Activated CD4-positive, alpha-beta T cell treated with anti-CD3 and anti-CD28 coated beads, Interleukin-2, amount 10 ng/mL, durations not matched to agents 24 days and 14 days (primary cell): ENCODE measurements at regions of chr1 and their contacts with region 1.

Region 1: DNA sequence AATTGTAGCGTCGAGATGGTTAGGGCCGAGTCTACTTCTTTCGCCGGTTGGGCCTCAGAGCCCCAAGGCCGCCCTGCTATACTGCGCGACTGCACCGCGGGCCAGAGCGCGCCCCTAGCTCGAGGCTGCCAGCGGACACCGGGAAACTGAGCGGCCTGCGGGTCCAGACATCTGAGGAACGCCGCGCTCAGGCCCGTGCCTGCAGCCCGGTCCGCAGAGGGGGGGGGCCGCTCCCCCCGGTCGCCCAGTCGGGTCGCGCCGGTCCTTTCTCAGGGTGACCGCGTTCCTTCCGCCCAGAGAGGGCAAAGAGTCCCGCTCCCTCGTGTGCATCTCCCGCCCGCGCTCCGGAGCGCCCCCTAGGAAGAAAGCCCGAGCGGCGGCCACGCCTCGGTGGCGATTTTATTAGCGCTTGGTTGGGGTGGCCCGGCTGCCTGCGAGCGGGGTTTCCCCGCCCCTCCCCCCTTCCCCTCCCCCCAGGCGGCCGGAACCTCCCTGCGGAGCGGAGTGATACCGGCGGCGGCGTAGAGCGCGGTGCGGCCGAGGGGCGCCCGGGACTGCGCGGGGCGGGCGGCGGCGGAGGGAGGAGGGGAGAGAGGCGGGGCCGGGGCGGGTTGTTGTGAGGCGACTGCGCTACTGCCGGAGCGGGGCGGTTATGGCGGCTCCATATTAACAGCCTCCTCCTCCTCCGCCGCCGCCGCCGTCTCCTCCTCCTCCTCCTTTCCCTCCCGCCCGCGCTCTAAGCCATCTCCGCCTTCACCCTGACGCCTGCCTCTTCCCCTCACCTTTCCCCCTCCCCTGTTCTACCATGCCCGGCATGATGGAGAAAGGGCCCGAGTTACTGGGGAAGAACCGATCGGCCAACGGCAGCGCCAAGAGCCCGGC is at the start of gene RCOR3:
- DNase-seq: peak; percentile 96
- H3K4me3 Mint-ChIP-seq: peak within 1 kb of the TSS; percentile 96
- H3K27ac Mint-ChIP-seq: peak within 1 kb of the TSS; percentile 97
- H3K4me1 Mint-ChIP-seq: peaks cover 13% of the 10 kb centered on the region
- H3K27me3 Mint-ChIP-seq: no peaks in the 10 kb centered on the region
- total RNA-seq, gene RCOR3: 38.0 and 39.8 TPM in 2 replicates

Region 2: GRCh38 chr1:211133836-211134669 is 124.9 kb before region 1 on chr1 and contains the start of gene KCNH1:
- intact Hi-C with region 1: loop called (anchors 5 kb)
- DNase-seq: peak; percentile 91
- H3K4me3 Mint-ChIP-seq: peak within 1 kb of the TSS; percentile 71
- H3K27ac Mint-ChIP-seq: no peak within 1 kb of the TSS
- H3K4me1 Mint-ChIP-seq: peaks cover 2% of the 10 kb centered on the region
- H3K27me3 Mint-ChIP-seq: peaks cover 75% of the 10 kb centered on the region
- total RNA-seq, gene KCNH1: not detected in 2 replicates

Region 3: GRCh38 chr1:211281320-211282022 is 22.5 kb after region 1 on chr1:
- intact Hi-C with region 1: loop called (anchors 1 kb)
- DNase-seq: no peak
- H3K4me3 Mint-ChIP-seq: no peak overlapping the region
- H3K27ac Mint-ChIP-seq: no peak overlapping the region
- H3K4me1 Mint-ChIP-seq: peaks cover 4% of the 10 kb centered on the region
- H3K27me3 Mint-ChIP-seq: no peaks in the 10 kb centered on the region

Region 4: DNA sequence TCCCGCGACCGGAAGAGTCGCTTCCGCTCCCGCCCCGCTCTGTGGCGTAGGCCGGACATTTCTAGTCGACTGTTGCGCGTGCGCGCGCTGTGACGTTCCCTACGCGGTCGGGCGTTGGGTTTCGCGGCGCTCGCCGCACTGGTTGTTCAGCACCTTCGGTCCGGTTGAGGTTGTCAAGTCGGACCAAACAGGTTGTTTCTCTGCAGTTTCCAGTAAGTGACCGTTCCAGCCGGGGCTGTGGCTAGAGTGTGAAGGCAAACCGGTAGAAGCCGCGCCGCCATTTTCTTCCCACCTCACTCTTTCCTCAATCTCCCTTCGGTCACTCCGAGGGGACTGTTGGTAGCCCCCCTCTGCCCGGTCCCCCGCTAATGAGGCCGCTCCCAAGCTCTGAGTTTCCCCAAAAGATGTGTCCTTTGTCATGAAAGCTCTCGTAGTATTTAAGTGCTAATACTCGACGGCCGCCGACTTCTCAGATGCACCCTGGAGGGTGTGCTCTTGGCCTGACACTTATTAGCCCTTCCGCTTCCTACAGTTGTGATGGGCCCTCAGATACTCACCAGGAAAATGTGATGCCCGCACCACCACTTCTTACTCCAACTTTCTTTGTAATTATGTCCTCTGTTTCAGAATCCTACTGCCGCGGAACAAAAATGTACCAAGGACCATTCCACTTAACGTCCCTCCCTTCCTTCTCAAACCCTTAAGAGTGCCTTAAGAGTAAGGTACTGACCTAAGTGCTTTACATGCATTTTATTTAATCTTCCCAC is 123.9 kb after region 1 on chr1:
- intact Hi-C with region 1: loop called (anchors 1 kb)
- DNase-seq: peak; percentile 95
- H3K4me3 Mint-ChIP-seq: peak overlapping the region; percentile 80
- H3K27ac Mint-ChIP-seq: peak overlapping the region; percentile 93
- H3K4me1 Mint-ChIP-seq: peaks cover 43% of the 10 kb centered on the region
- H3K27me3 Mint-ChIP-seq: peaks cover 6% of the 10 kb centered on the region

Region 5: GRCh38 chr1:211654838-211655787 is 396.1 kb after region 1 on chr1:
- intact Hi-C with region 1: loop called (anchors 10 kb)
- DNase-seq: peak; percentile 94
- H3K4me3 Mint-ChIP-seq: no peak overlapping the region
- H3K27ac Mint-ChIP-seq: no peak overlapping the region
- H3K4me1 Mint-ChIP-seq: peaks cover 6% of the 10 kb centered on the region
- H3K27me3 Mint-ChIP-seq: peaks cover 10% of the 10 kb centered on the region

Region 6: DNA sequence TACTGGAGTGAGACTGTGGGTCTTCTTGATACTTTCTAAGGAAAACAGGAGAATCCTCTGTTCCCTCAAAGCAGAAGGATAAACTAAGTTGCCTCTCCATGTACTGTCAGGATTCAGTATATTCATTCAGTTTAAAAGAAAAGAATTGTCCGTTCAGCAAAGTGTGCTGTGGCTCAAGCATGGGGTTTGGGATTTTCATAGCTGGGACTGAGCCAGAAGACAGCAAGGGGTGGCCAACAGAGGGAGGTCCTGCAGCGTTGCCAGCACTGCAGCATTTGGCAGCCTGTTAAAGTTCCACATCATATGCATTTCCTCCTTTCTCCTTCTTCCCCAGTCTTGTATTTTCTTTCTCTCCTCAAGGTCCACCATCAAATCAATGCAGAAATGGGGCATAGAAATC is 851.6 kb after region 1 on chr1:
- intact Hi-C with region 1: no loop called
- DNase-seq: no peak
- H3K4me3 Mint-ChIP-seq: no peak overlapping the region
- H3K27ac Mint-ChIP-seq: no peak overlapping the region
- H3K4me1 Mint-ChIP-seq: peaks cover 2% of the 10 kb centered on the region
- H3K27me3 Mint-ChIP-seq: no peaks in the 10 kb centered on the region